Psoas muscle (tissue), 8 donors: ENCODE measurements at regions of chr2 and their contacts with region 1.

Region 1: DNA sequence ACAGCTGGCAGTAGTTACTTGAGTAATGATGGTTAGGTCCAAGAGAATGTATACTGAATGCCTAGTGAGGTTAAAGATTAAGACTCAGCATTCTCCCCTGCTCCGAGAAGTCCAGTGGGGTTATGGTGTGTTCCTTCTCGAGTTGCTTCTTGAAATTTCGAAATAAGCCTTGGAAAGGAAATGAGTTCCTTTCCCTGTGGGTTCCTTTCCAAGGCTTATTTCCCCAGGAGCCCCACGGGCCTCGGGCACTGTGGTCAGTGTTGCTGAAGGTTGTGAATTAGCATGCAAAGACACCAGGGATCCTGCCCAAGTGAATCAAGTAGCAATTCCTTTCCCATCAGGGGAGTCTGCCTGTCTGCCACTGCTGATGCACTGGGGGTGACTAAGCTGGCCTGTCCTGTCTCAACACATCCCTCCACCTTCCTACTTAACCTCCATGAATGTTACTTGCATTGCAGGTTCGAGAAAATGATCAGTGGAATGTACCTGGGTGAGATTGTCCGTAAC is 53.6 kb downstream of the HK2 start:
- DNase-seq: no peak
- ATAC-seq: peak in 2 of 4 donors; percentile 19 to 22
- H3K4me3 ChIP-seq: no peak overlapping the region
- H3K27ac ChIP-seq: no peak overlapping the region
- H3K4me1 ChIP-seq: no peaks in the 10 kb centered on the region
- H3K27me3 ChIP-seq: no peaks in the 10 kb centered on the region
- CTCF ChIP-seq: no peak

Region 2: DNA sequence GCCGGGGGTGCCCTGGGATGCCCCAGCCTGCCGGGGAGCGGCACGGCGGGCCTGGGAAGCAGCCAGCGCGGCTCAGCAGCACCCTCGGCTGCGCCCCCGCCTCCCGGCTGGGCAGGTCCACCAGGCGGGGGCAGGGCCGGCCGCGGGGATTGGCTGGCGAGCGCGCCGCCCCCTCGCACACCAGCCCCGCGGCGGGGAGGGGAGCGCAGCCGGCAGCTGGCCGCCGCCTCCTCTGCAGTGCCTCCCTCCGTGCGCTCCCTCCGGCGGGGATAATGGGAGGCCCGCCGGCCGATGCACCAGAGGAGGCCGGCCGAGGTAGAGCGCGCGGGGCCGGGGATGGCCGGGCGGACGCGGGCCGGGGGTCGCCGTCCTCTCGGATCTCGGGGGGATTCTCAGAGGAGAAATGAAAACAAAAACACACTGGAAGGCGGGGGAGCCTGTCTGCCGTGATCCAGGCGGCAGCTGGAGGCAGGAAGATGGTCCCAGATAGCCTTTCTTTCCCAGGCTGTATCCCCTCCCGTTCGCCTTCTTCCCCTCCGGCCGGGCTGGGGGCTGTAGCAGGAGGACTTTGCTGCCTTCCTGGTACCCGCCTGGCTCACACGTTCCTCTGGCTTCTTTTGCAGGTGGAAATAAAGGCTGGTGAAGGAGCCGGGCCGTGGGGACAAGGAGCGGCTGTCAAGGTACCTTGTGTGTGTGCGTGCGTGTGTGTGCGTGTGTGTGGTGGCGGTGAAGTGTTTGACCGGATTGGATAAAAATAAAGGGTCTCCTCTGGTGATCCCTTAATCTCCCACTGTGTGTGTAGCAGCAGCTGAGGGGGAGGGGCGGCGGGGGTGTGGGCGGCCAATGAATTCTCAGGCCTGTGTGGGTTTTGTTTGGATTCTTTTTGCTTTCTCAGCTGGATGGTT is 884.8 kb before region 1 on chr2:
- intact Hi-C with region 1: no loop called
- DNase-seq: peak; percentile 85 to 90
- ATAC-seq: peak; percentile 95 to 98 (median 96)
- H3K4me3 ChIP-seq: peak overlapping the region; percentile 73
- H3K27ac ChIP-seq: no peak overlapping the region
- H3K4me1 ChIP-seq: peaks cover 10% of the 10 kb centered on the region
- H3K27me3 ChIP-seq: no peaks in the 10 kb centered on the region
- CTCF ChIP-seq: no peak

Region 3: DNA sequence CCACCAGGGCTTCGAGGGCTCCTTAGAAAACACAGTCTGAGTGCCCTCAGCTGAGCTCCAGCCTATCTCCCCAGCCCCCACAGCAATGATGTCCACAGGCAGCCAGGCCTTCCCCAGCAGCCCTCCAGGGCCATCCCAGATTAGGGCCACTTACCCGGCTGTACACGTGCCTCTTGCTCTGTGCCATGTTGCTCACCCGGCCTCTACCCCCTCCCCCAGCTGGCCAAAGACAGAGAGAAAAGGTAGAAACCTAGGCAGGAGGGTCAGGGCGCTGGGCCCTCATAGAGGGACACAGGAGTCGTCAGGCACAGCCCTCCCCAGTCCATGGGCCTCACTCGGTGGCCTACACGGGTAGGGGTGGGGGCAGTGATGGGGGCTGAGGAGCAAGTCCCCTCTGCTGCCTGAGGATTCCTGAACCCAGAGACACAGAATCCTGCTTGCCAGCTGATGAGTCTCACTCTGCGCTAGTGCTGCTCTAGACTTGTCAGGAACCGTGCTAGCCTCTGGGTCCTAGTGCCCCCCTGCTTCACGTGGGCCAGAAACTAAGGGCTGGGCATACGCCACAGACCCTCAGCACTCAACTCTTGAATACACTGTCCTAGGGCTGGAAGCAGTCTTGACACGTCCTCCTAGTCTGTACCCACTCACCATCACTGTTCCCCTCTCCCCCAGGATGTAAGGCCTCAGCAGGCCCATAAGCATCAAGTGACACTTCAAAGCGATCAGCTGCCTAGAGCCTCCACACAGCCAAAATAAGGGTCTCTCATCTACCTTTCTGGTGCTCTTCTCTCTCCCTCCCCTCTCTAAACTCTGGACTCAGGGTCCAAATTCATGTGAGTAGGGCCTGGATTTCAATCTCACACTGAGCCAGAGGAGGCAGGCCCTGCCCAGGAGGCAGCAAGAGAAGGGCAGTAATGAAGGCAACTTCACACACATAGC is 507.4 kb before region 1 on chr2 and contains the start of gene DCTN1:
- intact Hi-C with region 1: loop called in 1 of 2 experiments (anchors 10 kb)
- DNase-seq: peak; percentile 46 to 68
- ATAC-seq: peak; percentile 64 to 89 (median 82)
- H3K4me3 ChIP-seq: peak within 1 kb of the TSS; percentile 57
- H3K27ac ChIP-seq: no peak within 1 kb of the TSS
- H3K4me1 ChIP-seq: peaks cover 43% of the 10 kb centered on the region
- H3K27me3 ChIP-seq: no peaks in the 10 kb centered on the region
- CTCF ChIP-seq: no peak
- total RNA-seq, gene DCTN1: 99.0 to 131 (median 116) TPM